ENCODE measurements at regions of chr15 and their contacts with region 1.

Region 1: GRCh38 chr15:70853821-70854666 is at the start of gene LARP6:
- DNase-seq: peak in 1 of 2 donors; percentile 78
- H3K4me3 ChIP-seq: peak within 1 kb of the TSS; percentile 79 to 93
- H3K27ac ChIP-seq: peak within 1 kb of the TSS; percentile 93 to 98
- H3K4me1 ChIP-seq: peaks cover 0 to 32% of the 10 kb centered on the region in 2 donors
- H3K27me3 ChIP-seq: no peaks in the 10 kb centered on the region
- CTCF ChIP-seq: peak in 1 of 3 experiments; percentile 17
- total RNA-seq, gene LARP6: 18.7 TPM

Region 2: GRCh38 chr15:70741107-70741531 is 112.9 kb before region 1 on chr15:
- intact Hi-C with region 1: no loop called
- DNase-seq: peak in 1 of 2 donors; percentile 84
- H3K4me3 ChIP-seq: no peak overlapping the region
- H3K27ac ChIP-seq: peak overlapping the region; percentile 50 to 57
- H3K4me1 ChIP-seq: peaks cover 16 to 32% of the 10 kb centered on the region in 2 donors
- H3K27me3 ChIP-seq: no peaks in the 10 kb centered on the region
- CTCF ChIP-seq: no peak

Region 3: GRCh38 chr15:70763120-70763878 is 90.7 kb before region 1 on chr15 and contains the start of gene UACA:
- intact Hi-C with region 1: loop called (anchors 5 kb)
- DNase-seq: peak; percentile 88 to 98
- H3K4me3 ChIP-seq: peak within 1 kb of the TSS; percentile 87 to 99
- H3K27ac ChIP-seq: peak within 1 kb of the TSS; percentile 99
- H3K4me1 ChIP-seq: peaks cover 6 to 23% of the 10 kb centered on the region in 2 donors
- H3K27me3 ChIP-seq: no peaks in the 10 kb centered on the region
- CTCF ChIP-seq: no peak
- total RNA-seq, gene UACA: 34.0 TPM

Region 4: GRCh38 chr15:70826634-70827033 is 27.4 kb before region 1 on chr15:
- intact Hi-C with region 1: loop called (anchors 2 kb)
- DNase-seq: peak; percentile 33 to 90
- H3K4me3 ChIP-seq: no peak overlapping the region
- H3K27ac ChIP-seq: peak overlapping the region; percentile 39 to 58
- H3K4me1 ChIP-seq: peaks cover 0 to 4% of the 10 kb centered on the region in 2 donors
- H3K27me3 ChIP-seq: no peaks in the 10 kb centered on the region
- CTCF ChIP-seq: no peak

Region 5: DNA sequence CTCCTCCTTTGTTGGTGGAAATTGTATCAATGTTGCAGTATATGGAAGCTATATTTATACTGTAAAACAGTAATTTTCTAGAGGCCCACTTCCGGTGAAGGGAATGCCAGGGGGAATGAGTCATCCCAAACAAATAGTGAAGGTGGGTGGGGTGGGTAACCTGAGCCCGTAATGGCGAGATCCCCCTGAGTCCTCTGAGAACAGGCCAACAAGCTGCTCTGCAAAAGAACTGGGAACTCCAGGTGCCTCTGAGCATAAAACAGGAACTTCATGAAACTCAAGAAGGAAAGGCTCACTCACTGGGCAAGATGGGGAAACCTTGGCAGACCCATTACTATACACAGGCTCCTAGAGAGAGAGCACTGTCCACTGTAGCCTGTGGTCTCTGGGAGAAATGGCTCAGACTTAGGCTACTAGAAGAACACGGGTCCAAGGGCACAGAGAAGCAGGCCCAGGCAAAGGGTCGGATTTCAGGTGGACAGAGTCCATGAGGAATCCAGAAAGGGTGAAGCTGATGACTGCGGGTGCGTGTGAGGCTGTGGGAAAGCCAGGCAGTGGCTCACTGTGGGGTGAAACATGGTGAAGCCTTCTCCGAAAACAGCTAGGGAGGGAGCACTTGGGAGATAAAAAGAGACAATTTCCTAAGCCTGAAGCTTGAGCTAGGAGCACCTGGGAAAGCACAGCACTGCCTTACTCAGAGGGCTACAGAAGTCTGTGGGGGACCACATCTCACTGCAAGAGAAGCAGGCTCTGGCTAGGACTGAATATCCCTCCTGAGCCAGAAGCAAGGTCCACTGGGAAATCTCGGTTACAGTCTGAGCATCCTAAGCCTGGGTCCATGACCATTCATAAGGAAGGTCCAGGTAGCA is 19.9 kb before region 1 on chr15:
- intact Hi-C with region 1: loop called (anchors 1 kb)
- DNase-seq: peak in 1 of 2 donors; percentile 65
- H3K4me3 ChIP-seq: no peak overlapping the region
- H3K27ac ChIP-seq: peak overlapping the region; percentile 86 to 91
- H3K4me1 ChIP-seq: peaks cover 11 to 34% of the 10 kb centered on the region in 2 donors
- H3K27me3 ChIP-seq: no peaks in the 10 kb centered on the region
- CTCF ChIP-seq: no peak

Region 6: DNA sequence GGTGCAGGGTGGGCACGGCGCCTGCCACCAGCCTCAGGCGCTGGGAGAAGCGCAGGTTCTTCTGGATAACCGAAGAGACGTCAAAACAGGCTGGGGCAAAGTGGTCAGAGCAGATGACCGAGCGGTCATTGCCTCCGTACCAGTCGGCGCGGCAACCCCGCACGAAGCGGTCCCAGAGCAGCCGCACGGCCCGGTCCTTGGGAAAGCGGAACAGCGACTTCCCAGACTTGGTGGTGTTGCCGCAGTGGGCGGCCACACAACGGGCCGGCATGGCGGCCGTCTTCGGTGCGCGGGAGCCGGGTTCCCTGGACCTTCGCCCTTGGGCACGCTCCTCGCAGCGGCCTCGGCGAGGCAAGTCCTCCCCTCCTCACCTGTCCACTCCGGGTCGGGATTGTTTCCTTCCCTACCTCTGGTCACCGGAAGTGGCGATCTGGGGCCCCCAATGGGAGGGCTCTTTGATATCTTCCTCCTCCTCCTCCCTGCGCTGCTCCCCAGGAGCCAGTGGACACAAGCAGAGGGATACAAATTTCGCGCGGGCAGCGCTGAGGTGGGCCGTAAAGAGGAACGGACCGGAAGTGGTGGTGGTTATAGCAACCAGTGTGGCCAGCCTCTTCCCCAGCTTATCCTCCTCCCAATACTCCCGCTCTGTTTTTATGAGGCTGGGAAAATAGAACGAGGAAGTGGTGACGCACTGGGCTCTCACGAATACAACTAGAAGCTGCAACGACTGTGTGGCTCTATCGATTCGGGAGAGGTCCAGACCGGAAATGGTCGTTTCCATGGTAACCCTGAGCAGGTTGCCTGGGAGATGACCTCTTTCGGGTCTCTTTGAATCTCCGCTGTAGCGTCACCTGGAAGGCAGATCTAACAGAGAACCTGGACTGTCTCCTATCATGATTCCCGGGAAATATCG is 38.2 kb after region 1 on chr15 and contains the starts of genes LRRC49 and THAP10:
- intact Hi-C with region 1: loop called (anchors 1 kb)
- DNase-seq: peak; percentile 35 to 94
- H3K4me3 ChIP-seq: peak within 1 kb of the TSS; percentile 64 to 81
- H3K27ac ChIP-seq: peak within 1 kb of the TSS; percentile 79 to 80
- H3K4me1 ChIP-seq: peaks cover 0 to 7% of the 10 kb centered on the region in 2 donors
- H3K27me3 ChIP-seq: no peaks in the 10 kb centered on the region
- CTCF ChIP-seq: no peak
- total RNA-seq, gene LRRC49: 23.1 TPM
- total RNA-seq, gene THAP10: 3.1 TPM